Activated CD4-positive, alpha-beta memory T cell treated with anti-CD3 and anti-CD28 coated beads, Interleukin-2, amount 10 ng/mL, durations not matched to agents 7 days and 5 days (primary cell): ENCODE measurements at regions of chr4 and their contacts with region 1.

Region 1: GRCh38 chr4:83284193-83285054 is at the start of gene COQ2:
- DNase-seq: peak; percentile 95
- H3K4me3 Mint-ChIP-seq: peak within 1 kb of the TSS; percentile 87
- H3K27ac Mint-ChIP-seq: peak within 1 kb of the TSS; percentile 97
- H3K4me1 Mint-ChIP-seq: peaks cover 45% of the 10 kb centered on the region
- H3K27me3 Mint-ChIP-seq: no peaks in the 10 kb centered on the region
- total RNA-seq, gene COQ2: 20.3 to 20.7 TPM

Region 2: GRCh38 chr4:82900331-82901128 is 383.9 kb before region 1 on chr4 and contains the start of gene THAP9:
- CTCF ChIA-PET with region 1: interaction called, 4 read pairs
- POLR2A ChIA-PET with region 1: interaction called, 11 read pairs
- DNase-seq: peak; percentile 99
- H3K4me3 Mint-ChIP-seq: no peak within 1 kb of the TSS
- H3K27ac Mint-ChIP-seq: no peak within 1 kb of the TSS
- H3K4me1 Mint-ChIP-seq: peaks cover 37% of the 10 kb centered on the region
- H3K27me3 Mint-ChIP-seq: peaks cover 9% of the 10 kb centered on the region
- total RNA-seq, gene THAP9: 2.0 to 2.4 TPM

Region 3: DNA sequence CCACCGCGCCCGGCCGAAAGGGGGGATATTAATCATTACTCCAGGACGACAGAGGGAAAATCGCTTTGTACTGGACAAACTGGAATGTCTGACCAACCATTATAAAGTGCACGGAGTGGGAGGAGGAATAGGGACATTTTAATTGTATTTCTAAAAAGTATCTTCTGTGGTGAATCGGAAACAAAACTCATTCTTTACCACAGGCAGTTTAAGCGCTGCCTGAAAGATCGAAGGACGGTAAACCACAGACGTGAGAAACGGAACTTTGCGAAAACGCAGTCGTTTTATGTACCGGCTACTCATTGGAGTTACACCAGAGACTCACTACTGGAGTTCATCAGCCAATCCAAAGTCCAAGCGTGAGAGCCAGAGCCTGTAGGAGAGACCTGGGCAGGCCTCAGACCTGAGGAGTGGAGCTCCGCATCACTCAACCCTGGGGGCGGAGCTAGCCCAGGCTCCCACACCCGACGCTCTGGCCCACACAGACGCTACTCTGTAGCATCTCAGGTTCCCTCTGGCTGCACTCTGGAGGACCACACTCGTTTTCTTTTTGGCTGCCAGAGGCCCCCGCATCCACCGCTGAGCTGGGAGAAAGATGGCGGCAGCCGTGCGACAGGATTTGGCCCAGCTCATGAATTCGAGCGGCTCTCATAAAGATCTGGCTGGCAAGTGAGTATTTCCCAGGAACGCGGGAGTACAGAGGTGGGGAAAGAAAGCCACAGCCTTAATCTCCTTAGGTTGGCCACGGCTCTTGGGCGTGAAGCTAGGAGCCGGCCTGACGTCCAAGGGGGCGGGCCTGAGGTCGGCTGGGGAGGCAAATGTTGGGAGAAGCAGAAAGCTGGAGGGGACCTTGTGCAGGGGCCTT is 249.6 kb before region 1 on chr4 and contains the start of gene COPS4:
- CTCF ChIA-PET with region 1: interaction called, 28 read pairs
- POLR2A ChIA-PET with region 1: interaction called, 15 read pairs
- DNase-seq: peak; percentile 97
- H3K4me3 Mint-ChIP-seq: peak within 1 kb of the TSS; percentile 95
- H3K27ac Mint-ChIP-seq: peak within 1 kb of the TSS; percentile 99
- H3K4me1 Mint-ChIP-seq: peaks cover 31% of the 10 kb centered on the region
- H3K27me3 Mint-ChIP-seq: peaks cover 11% of the 10 kb centered on the region
- total RNA-seq, gene COPS4: 30.9 to 32.8 TPM

Region 4: DNA sequence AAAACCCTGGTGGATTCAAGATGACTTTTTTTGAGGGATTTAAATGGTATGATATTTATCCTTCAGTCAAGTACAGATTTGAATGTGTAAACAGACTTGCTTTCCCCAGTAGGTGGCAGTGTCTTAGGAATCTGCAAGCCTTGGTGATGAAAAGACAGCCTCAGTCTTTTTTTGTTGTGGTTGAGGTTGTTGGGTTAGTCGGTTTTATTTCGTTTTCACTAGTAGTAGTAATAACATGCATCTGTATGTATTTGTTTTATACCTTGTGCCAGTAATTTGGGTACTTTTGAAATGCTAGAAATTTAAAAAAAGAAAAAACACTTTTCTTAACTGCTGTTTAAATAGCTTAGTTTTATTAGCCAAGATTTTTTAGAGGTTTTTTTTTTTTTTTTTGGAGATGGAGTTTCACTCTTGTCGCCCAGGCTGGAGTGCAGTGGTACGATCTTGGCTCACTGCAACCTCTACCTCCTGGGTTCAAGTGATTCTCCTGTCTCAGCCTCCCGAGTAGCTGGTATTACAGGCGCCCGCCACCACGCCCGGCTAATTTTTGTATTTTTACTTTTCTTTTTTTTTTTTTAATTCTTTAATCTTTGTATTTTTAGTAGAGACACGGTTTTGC is 210.2 kb before region 1 on chr4:
- CTCF ChIA-PET with region 1: interaction called, 60 read pairs
- POLR2A ChIA-PET with region 1: interaction called, 5 read pairs
- DNase-seq: peak; percentile 58
- H3K4me3 Mint-ChIP-seq: peak overlapping the region; percentile 19
- H3K27ac Mint-ChIP-seq: peak overlapping the region; percentile 17
- H3K4me1 Mint-ChIP-seq: peaks cover 22% of the 10 kb centered on the region
- H3K27me3 Mint-ChIP-seq: peaks cover 1% of the 10 kb centered on the region

Region 5: DNA sequence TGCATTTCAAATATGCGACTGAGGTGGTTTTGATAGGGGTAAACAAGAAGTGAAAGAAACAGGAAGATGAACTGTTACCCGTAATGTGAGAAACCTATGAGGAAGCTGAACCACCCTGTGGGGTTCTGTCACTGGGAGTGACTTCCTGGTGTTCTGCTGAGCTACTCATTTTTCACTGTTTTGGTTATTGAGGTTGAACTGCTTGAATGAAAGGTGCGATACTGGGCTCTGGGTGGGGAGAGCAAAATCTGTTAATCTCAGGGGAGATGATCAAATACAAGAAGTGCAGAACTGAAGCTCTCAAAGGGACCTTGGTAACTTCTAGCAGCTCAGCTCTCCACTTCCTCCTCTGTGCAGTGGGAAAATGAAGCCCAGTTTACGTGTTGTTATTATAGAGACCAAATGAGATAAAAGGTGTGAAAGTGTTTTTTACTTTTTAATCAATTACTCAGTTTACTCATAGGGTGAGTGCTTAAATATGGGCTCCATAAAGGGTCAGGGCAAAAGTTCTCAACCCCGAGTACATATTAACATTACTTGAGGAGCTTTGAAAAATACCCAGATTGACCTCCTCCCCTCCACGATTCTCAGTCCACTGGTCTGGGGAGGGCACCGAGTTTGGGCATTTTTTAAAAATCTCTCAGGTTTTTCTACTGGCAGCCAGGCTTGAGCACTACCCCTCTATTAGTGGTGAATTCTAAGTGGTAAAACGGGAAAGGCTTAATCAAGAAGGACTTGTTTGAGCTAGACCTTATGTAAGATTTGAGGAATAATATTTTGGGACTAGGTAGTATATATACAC is 66.5 kb before region 1 on chr4:
- CTCF ChIA-PET with region 1: interaction called, 5 read pairs
- POLR2A ChIA-PET with region 1: interaction called, 10 read pairs
- DNase-seq: peak; percentile 81
- H3K4me3 Mint-ChIP-seq: peak overlapping the region; percentile 22
- H3K27ac Mint-ChIP-seq: peak overlapping the region; percentile 82
- H3K4me1 Mint-ChIP-seq: peaks cover 77% of the 10 kb centered on the region
- H3K27me3 Mint-ChIP-seq: peaks cover 17% of the 10 kb centered on the region

Region 6: DNA sequence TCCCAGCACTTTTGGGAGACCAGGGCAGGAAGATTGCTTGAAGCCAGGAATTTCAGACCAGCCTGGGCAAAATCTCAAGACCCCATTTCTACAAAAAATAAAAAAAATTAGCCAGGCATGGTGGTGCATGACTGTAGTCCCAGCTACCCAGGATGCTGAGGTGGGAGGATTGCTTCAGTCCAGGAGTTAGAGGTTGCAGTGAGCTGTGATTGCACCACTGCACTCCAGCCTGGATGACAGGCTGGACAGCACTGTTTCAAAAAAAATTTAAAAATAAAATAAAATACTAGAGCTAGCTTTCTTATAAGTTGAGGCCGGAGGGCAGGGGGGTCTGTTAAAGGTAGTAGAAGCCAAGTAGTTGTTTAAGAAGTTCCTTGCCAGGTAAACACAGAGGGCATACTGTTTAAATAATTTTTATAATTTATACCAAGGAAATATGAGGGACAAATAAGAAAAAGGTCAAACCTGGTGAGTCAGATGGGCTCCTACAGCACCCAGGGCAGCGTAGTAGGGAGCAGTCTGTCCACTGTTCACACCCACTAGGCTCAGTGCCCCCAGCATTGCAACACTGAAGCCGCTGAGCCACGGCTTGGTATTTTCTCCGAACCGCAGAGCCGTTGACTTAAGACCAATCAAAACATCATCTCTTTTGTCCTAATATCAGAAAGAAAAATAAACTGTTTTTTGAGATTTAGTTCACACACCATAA is 17.1 kb before region 1 on chr4:
- CTCF ChIA-PET with region 1: interaction called, 18 read pairs
- POLR2A ChIA-PET with region 1: interaction called, 9 read pairs
- DNase-seq: no peak
- H3K4me3 Mint-ChIP-seq: no peak overlapping the region
- H3K27ac Mint-ChIP-seq: no peak overlapping the region
- H3K4me1 Mint-ChIP-seq: peaks cover 24% of the 10 kb centered on the region
- H3K27me3 Mint-ChIP-seq: no peaks in the 10 kb centered on the region

Region 7: GRCh38 chr4:83387753-83388676 is 103.6 kb after region 1 on chr4:
- CTCF ChIA-PET with region 1: interaction called, 16 read pairs
- POLR2A ChIA-PET with region 1: interaction called, 8 read pairs
- DNase-seq: peak; percentile 39
- H3K4me3 Mint-ChIP-seq: no peak overlapping the region
- H3K27ac Mint-ChIP-seq: peak overlapping the region; percentile 27
- H3K4me1 Mint-ChIP-seq: peaks cover 16% of the 10 kb centered on the region
- H3K27me3 Mint-ChIP-seq: peaks cover 2% of the 10 kb centered on the region

Region 8: DNA sequence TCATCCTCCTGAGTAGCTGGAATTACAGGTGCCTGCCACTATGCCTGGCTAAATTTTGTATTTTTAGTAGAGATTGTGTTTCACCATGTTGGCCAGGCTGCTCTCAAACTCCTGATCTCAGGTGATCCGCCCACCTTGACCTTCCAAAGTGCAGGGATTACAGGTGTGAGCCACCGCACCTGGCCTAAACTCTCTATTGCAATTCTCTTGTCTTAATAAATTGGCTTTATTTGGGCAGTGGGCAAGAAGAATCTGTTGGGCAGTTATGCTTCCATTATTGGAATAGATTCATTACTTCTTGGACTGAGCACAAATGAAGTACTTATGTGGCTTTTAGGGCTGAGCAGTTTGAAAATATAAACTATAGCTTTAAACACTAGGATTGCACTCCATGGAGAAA is 243.2 kb after region 1 on chr4:
- CTCF ChIA-PET with region 1: no interaction called
- POLR2A ChIA-PET with region 1: no interaction called
- DNase-seq: no peak
- H3K4me3 Mint-ChIP-seq: no peak overlapping the region
- H3K27ac Mint-ChIP-seq: no peak overlapping the region
- H3K4me1 Mint-ChIP-seq: no peaks in the 10 kb centered on the region
- H3K27me3 Mint-ChIP-seq: peaks cover 35% of the 10 kb centered on the region